Heart right ventricle (tissue), 16 donors: ENCODE measurements at regions of chr21 and their contacts with region 1.

Region 1: GRCh38 chr21:33924079-33924765 is 8.6 kb upstream of the ATP5PO start:
- DNase-seq: peak; percentile 89 to 90
- ATAC-seq: peak; percentile 94 to 98 (median 96)
- H3K4me3 ChIP-seq: no peak overlapping the region
- H3K27ac ChIP-seq: no peak overlapping the region
- H3K4me1 ChIP-seq: peaks cover 0 to 10% (median 0%) of the 10 kb centered on the region in 9 donors
- H3K27me3 ChIP-seq: peaks cover 0 to 5% (median 0%) of the 10 kb centered on the region in 7 donors
- CTCF ChIP-seq: peak; percentile 90 to 96 (median 95)

Region 2: GRCh38 chr21:34351786-34352241 is 427.6 kb after region 1 on chr21:
- intact Hi-C with region 1: loop called (anchors 1 to 5 kb)
- DNase-seq: peak; percentile 34 to 50
- ATAC-seq: peak; percentile 77 to 93 (median 80)
- H3K4me3 ChIP-seq: no peak overlapping the region
- H3K27ac ChIP-seq: no peak overlapping the region
- H3K4me1 ChIP-seq: peaks cover 0 to 21% (median 5%) of the 10 kb centered on the region in 9 donors
- H3K27me3 ChIP-seq: peaks cover 0 to 6% (median 0%) of the 10 kb centered on the region in 7 donors
- CTCF ChIP-seq: peak; percentile 55 to 82 (median 69)